ENCODE measurements at regions of chr5 and their contacts with region 1.

Region 1: GRCh38 chr5:84382363-84383295 is 2.1 kb downstream of the EDIL3 start:
- DNase-seq: peak; percentile 57 to 81
- ATAC-seq: peak; percentile 65
- H3K4me3 ChIP-seq: peak overlapping the region; percentile 67 to 93
- H3K27ac ChIP-seq: peak overlapping the region; percentile 37 to 89
- H3K4me1 ChIP-seq: peaks cover 0 to 3% of the 10 kb centered on the region in 2 donors
- H3K27me3 ChIP-seq: no peaks in the 10 kb centered on the region

Region 2: DNA sequence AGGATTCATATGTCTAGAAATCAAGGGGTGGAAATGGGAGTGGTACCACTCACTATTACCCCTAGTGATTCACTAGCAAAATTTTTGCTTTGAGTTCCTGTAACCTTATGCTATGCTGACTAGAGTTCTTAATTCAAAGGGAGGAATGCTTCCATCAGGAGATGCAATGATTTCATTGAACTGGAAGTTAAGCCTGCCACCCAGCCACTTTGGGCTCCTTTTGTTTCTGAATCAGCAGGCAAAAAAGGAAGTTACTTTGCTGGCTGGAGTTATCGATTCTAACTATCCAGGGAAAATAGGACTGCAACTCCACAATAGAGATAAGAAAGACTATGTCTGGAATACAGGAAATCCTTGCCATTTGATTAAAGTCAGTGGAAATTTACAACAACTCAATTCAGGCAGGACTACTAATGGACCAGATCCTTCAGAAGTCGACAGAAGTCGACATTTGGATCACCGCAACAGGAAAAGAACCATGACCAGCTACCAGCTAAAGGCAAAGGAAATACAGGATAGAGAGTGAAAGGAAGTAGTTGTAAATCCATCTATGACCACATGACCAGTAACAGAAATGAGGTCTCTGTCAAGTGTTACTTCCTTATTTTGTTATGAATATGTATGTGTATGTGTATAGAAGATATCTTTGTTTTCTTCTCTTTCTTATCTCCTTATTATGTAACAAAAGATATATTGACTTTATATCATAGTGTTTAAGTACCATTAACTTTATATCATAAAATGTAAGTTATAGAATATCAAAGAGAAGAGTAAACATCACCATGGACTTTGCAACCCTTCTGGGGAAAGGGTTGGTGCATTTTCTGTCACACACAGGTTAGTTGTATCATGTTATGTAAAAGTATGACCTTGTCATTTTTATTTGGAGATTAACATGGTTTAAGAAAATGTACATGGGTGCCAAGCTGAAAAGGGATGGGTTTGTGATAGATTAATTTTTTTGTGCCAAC is 463.3 kb before region 1 on chr5:
- intact Hi-C with region 1: loop called in 1 of 2 experiments (anchors 5 kb)
- DNase-seq: no peak
- ATAC-seq: no peak
- H3K4me3 ChIP-seq: no peak overlapping the region
- H3K27ac ChIP-seq: no peak overlapping the region
- H3K4me1 ChIP-seq: peaks cover 0 to 6% of the 10 kb centered on the region in 2 donors
- H3K27me3 ChIP-seq: no peaks in the 10 kb centered on the region

Region 3: GRCh38 chr5:84274585-84275468 is 107.8 kb before region 1 on chr5:
- intact Hi-C with region 1: no loop called
- DNase-seq: no peak
- ATAC-seq: no peak
- H3K4me3 ChIP-seq: no peak overlapping the region
- H3K27ac ChIP-seq: no peak overlapping the region
- H3K4me1 ChIP-seq: peaks cover 0 to 2% of the 10 kb centered on the region in 2 donors
- H3K27me3 ChIP-seq: no peaks in the 10 kb centered on the region

Region 4: DNA sequence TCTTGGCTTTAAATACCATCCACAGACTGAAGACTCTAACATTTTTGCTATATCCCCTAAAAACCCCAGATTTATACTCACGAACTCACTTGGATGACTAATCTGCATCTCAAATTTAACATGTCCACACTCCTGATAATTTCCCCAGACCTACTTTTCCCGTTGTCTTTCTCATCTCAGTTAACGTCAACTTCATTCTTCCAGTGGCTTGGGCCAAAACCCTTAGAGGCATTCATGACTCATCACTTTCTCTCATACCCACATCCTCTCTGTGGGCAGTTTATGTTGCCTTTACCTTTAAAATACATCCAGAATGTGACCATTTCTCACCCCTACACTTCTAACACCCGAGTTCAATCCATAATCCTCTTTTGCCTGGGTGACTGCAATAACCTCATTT is 94.7 kb before region 1 on chr5:
- intact Hi-C with region 1: loop called (anchors 5 kb)
- DNase-seq: no peak
- ATAC-seq: no peak
- H3K4me3 ChIP-seq: no peak overlapping the region
- H3K27ac ChIP-seq: no peak overlapping the region
- H3K4me1 ChIP-seq: peaks cover 2 to 8% of the 10 kb centered on the region in 2 donors
- H3K27me3 ChIP-seq: no peaks in the 10 kb centered on the region